Breast epithelium (tissue), 4 donors: ENCODE measurements at regions of chr15 and their contacts with region 1.

Region 1: GRCh38 chr15:58440158-58440910 is 8.5 kb downstream of the LIPC start:
- DNase-seq: no peak
- H3K4me3 ChIP-seq: no peak overlapping the region
- H3K27ac ChIP-seq: peak overlapping the region; percentile 58 to 77
- H3K4me1 ChIP-seq: no peaks in the 10 kb centered on the region
- H3K27me3 ChIP-seq: no peaks in the 10 kb centered on the region
- CTCF ChIP-seq: no peak
- POLR2A ChIP-seq: no peak

Region 2: DNA sequence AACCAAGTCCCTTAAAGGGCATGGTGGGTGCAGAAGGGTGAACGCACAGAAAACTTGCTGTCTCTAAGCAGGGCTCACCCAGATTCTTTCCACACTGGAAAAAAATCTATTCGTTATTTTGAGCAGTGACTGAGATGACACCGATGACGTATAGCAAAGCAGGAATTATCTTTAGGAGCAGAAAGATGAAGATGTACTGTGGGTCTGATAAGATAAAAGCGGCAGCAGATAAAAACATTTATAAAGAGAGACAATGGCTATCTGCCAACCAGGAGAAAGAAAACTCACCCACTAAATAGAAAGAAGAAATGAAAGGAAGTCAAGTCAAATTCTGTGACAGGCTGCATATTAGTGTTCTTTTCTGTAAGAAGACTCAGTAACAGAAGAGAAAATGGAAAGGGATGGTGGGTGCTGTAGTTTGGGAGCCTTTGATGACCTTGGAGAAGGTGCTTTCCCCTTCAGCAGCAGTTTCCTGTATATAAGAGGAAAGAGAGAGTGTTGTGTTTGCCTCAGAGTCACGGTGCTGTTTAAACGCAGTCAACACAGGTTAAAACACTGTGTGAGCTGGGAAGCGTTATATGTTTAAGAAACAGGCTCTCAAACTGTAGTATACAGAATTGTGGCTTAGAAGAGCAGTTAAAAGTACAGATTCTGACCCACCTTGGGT is 190.6 kb before region 1 on chr15:
- intact Hi-C with region 1: no loop called
- DNase-seq: no peak
- H3K4me3 ChIP-seq: no peak overlapping the region
- H3K27ac ChIP-seq: no peak overlapping the region
- H3K4me1 ChIP-seq: no peaks in the 10 kb centered on the region
- H3K27me3 ChIP-seq: no peaks in the 10 kb centered on the region
- CTCF ChIP-seq: no peak
- POLR2A ChIP-seq: no peak

Region 3: DNA sequence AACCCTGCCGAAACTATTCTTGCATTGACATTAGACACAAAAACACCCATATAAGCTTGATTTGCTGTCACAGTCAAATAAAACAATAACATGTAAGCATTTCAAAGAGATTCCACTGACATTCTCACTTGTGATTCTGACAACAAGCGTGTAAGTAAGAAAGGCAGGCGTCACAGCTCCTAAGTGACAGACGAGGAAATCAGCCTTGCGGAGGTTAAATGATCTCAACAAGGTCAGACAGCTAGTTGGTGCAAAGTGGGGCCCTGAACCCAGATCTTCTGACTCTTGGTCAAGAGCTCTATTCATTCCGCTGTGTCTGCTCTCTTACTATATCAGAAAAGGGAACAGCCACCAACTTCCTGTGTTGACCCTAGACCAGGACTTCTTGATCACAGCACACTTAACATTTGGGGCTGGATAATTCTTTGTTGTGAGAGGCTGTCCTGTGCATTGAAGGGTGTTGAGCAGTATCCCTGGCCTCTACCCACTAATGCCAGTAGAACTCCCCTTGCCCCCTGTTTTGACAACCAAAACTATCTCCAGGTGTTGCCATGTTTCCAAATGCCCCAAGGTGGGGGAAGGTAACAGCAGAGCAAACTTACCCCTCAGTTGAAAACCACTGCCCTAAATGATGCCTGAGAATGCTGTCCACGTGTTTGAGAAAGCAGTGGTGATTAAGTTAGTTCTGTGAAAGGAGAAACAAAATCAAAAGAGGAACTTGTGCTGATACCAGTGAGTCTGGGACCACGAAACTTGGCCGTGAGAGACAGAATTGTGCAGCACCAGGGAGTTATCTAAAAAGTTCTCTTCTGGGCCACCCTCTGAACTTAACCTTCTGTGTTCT is 77.6 kb after region 1 on chr15:
- intact Hi-C with region 1: loop called (anchors 10 kb)
- DNase-seq: no peak
- H3K4me3 ChIP-seq: no peak overlapping the region
- H3K27ac ChIP-seq: peak overlapping the region in 1 of 2 donors; percentile 19
- H3K4me1 ChIP-seq: no peaks in the 10 kb centered on the region
- H3K27me3 ChIP-seq: no peaks in the 10 kb centered on the region
- CTCF ChIP-seq: no peak
- POLR2A ChIP-seq: no peak